Cardiac septum (tissue), 1 donor: ENCODE measurements at regions of chr6 and their contacts with region 1.

Region 1: GRCh38 chr6:156564127-156564806 is 212.9 kb upstream of the ARID1B start:
- DNase-seq: peak; percentile 90

Region 2: GRCh38 chr6:156776840-156777576 is 212.7 kb after region 1 on chr6 and contains the start of gene ARID1B:
- intact Hi-C with region 1: loop called (anchors 10 kb)
- DNase-seq: peak; percentile 90
- total RNA-seq, gene ARID1B: 61.1 TPM

Region 3: GRCh38 chr6:156876302-156876701 is 312.0 kb after region 1 on chr6:
- intact Hi-C with region 1: loop called (anchors 10 kb)
- DNase-seq: no peak

Region 4: DNA sequence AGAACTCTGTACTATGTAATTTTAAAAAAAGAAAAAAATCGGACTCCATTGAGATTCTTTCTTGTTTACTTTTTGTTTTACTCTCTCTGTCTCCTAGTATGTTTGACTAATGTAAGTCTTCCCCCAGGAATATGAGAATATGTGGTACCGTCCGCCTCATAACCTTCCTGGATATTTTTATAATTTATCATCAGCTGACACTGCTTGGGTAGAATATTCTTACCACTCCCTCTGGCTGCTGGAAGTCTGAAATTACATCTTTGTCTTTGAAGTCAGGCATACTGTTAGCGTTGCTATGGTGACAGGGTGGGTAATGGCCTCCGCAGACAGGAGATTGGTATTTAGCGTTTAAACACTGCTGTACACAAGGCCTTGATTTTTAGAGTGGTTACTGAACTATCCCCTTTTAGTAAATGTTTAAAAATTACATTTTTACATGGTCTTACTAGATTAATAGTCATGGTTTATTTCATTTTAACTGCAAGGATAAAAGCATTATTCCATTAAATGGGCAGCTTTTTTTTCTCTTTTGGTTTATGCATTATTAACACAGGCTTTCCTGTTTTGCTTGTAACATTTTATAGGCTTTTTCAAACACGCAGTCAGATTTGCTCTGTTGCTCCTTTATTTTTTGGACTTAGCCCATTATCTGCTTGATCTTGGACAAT is 389.3 kb after region 1 on chr6:
- intact Hi-C with region 1: loop called (anchors 10 kb)
- DNase-seq: no peak

Region 5: GRCh38 chr6:157021344-157021992 is 457.2 kb after region 1 on chr6:
- intact Hi-C with region 1: loop called (anchors 10 kb)
- DNase-seq: peak; percentile 96

Region 6: GRCh38 chr6:157184202-157185020 is 620.1 kb after region 1 on chr6:
- intact Hi-C with region 1: loop called (anchors 10 kb)
- DNase-seq: no peak